HEK293 (cell line): ENCODE measurements at regions of chr6 and their contacts with region 1.

Region 1: GRCh38 chr6:100099189-100100074 is 105.4 kb upstream of the MCHR2 start:
- H3K4me3 ChIP-seq: no peak overlapping the region
- H3K27ac ChIP-seq: no peak overlapping the region
- H3K4me1 ChIP-seq: no peaks in the 10 kb centered on the region
- CTCF ChIP-seq: no peak

Region 2: GRCh38 chr6:100078509-100078908 is 20.9 kb before region 1 on chr6:
- CTCF ChIA-PET with region 1: interaction called, 31 read pairs
- POLR2A ChIA-PET with region 1: no interaction called
- H3K4me3 ChIP-seq: no peak overlapping the region
- H3K27ac ChIP-seq: no peak overlapping the region
- H3K4me1 ChIP-seq: no peaks in the 10 kb centered on the region
- CTCF ChIP-seq: peak; percentile 44

Region 3: GRCh38 chr6:100084291-100084953 is 15.0 kb before region 1 on chr6:
- CTCF ChIA-PET with region 1: interaction called, 16 read pairs
- POLR2A ChIA-PET with region 1: no interaction called
- H3K4me3 ChIP-seq: no peak overlapping the region
- H3K27ac ChIP-seq: no peak overlapping the region
- H3K4me1 ChIP-seq: no peaks in the 10 kb centered on the region
- CTCF ChIP-seq: no peak

Region 4: GRCh38 chr6:100126790-100127484 is 27.5 kb after region 1 on chr6:
- CTCF ChIA-PET with region 1: no interaction called
- POLR2A ChIA-PET with region 1: no interaction called
- H3K4me3 ChIP-seq: no peak overlapping the region
- H3K27ac ChIP-seq: no peak overlapping the region
- H3K4me1 ChIP-seq: no peaks in the 10 kb centered on the region
- CTCF ChIP-seq: no peak